ENCODE measurements at regions of chr11 and their contacts with region 1.

Region 1: DNA sequence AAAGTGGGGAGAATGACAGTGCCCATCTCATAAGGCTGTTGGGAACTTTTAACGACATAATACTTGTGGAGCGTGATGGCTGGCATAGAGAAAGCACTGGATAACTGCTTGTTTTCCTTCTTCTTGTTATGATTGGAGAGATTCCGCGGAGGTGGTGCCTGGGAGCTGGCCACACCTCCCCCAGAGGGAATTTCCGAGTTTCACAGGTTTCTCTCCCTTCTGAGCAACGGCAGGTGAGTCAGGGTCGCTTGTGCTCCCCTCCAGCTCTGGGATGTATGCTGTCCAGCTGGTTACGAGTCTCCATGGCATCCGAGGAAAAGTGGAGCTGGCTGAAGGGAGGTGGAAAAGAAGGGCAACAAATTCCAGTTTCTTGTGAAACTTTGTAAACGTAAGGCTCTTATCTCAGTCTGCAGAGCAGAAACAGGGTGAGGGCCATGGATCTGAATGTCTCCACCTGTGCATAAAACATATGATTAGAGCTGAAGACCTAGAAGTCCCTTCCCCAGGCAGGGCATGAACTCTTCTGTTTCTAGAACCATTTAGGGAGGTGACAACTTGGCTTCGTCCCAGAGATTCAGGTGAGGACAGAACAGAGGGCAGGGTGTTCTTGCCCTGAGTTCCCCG is 10.0 kb upstream of the PLET1 start:
- DNase-seq: peak; percentile 67 to 71
- H3K4me3 ChIP-seq: peak overlapping the region; percentile 38
- H3K4me3 Mint-ChIP-seq: peak overlapping the region; percentile 75
- H3K27ac Mint-ChIP-seq: peak overlapping the region; percentile 53
- H3K4me1 ChIP-seq: peaks cover 24% of the 10 kb centered on the region
- H3K4me1 Mint-ChIP-seq: peaks cover 28% of the 10 kb centered on the region
- H3K27me3 ChIP-seq: no peaks in the 10 kb centered on the region
- H3K27me3 Mint-ChIP-seq: no peaks in the 10 kb centered on the region
- CTCF ChIP-seq: no peak

Region 2: DNA sequence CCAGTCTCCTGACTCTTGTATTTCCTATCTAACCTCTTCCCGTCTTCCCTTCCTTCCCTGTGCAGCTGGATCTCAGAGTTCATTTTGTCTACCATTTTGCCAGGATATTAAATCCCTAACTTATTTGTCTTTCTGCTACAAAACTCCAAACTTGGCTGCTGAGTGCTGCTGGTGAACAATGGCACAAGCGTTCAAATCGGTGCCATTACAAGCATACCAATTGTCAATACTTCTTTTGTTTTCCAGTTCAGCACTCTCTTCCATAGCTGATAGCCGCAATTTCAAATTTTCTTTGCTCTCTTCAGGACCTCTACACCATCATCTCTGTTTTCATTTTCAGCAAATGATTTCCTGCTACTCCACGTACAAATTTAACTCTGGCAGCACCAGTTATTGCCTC is 120.1 kb before region 1 on chr11:
- CTCF ChIA-PET with region 1: no interaction called
- POLR2A ChIA-PET with region 1: no interaction called
- intact Hi-C with region 1: no loop called
- DNase-seq: no peak
- H3K4me3 ChIP-seq: no peak overlapping the region
- H3K4me3 Mint-ChIP-seq: no peak overlapping the region
- H3K27ac Mint-ChIP-seq: no peak overlapping the region
- H3K4me1 ChIP-seq: no peaks in the 10 kb centered on the region
- H3K4me1 Mint-ChIP-seq: no peaks in the 10 kb centered on the region
- H3K27me3 ChIP-seq: no peaks in the 10 kb centered on the region
- H3K27me3 Mint-ChIP-seq: no peaks in the 10 kb centered on the region
- CTCF ChIP-seq: no peak

Region 3: GRCh38 chr11:112226062-112226830 is 44.4 kb before region 1 on chr11 and contains the start of gene PTS:
- CTCF ChIA-PET with region 1: interaction called, 3 read pairs
- POLR2A ChIA-PET with region 1: interaction called, 4 read pairs
- intact Hi-C with region 1: loop called (anchors 1 kb)
- DNase-seq: peak; percentile 91 to 94
- H3K4me3 ChIP-seq: peak within 1 kb of the TSS; percentile 63
- H3K4me3 Mint-ChIP-seq: peak within 1 kb of the TSS; percentile 98
- H3K27ac Mint-ChIP-seq: peak within 1 kb of the TSS; percentile 98
- H3K4me1 ChIP-seq: peaks cover 28% of the 10 kb centered on the region
- H3K4me1 Mint-ChIP-seq: peaks cover 21% of the 10 kb centered on the region
- H3K27me3 ChIP-seq: no peaks in the 10 kb centered on the region
- H3K27me3 Mint-ChIP-seq: no peaks in the 10 kb centered on the region
- CTCF ChIP-seq: no peak
- total RNA-seq, gene PTS: 78.0 and 79.5 TPM in 2 replicates

Region 4: GRCh38 chr11:112238041-112238440 is 32.6 kb before region 1 on chr11:
- CTCF ChIA-PET with region 1: no interaction called
- POLR2A ChIA-PET with region 1: no interaction called
- intact Hi-C with region 1: no loop called
- DNase-seq: no peak
- H3K4me3 ChIP-seq: no peak overlapping the region
- H3K4me3 Mint-ChIP-seq: no peak overlapping the region
- H3K27ac Mint-ChIP-seq: no peak overlapping the region
- H3K4me1 ChIP-seq: peaks cover 12% of the 10 kb centered on the region
- H3K4me1 Mint-ChIP-seq: peaks cover 32% of the 10 kb centered on the region
- H3K27me3 ChIP-seq: no peaks in the 10 kb centered on the region
- H3K27me3 Mint-ChIP-seq: no peaks in the 10 kb centered on the region
- CTCF ChIP-seq: no peak

Region 5: GRCh38 chr11:112249856-112250610 is 20.6 kb before region 1 on chr11:
- CTCF ChIA-PET with region 1: no interaction called
- POLR2A ChIA-PET with region 1: interaction called, 6 read pairs
- intact Hi-C with region 1: loop called (anchors 1 kb)
- DNase-seq: peak; percentile 61 to 76
- H3K4me3 ChIP-seq: no peak overlapping the region
- H3K4me3 Mint-ChIP-seq: no peak overlapping the region
- H3K27ac Mint-ChIP-seq: no peak overlapping the region
- H3K4me1 ChIP-seq: peaks cover 21% of the 10 kb centered on the region
- H3K4me1 Mint-ChIP-seq: no peaks in the 10 kb centered on the region
- H3K27me3 ChIP-seq: no peaks in the 10 kb centered on the region
- H3K27me3 Mint-ChIP-seq: no peaks in the 10 kb centered on the region
- CTCF ChIP-seq: no peak